ENCODE measurements at regions of chr15 and their contacts with region 1.

Region 1: DNA sequence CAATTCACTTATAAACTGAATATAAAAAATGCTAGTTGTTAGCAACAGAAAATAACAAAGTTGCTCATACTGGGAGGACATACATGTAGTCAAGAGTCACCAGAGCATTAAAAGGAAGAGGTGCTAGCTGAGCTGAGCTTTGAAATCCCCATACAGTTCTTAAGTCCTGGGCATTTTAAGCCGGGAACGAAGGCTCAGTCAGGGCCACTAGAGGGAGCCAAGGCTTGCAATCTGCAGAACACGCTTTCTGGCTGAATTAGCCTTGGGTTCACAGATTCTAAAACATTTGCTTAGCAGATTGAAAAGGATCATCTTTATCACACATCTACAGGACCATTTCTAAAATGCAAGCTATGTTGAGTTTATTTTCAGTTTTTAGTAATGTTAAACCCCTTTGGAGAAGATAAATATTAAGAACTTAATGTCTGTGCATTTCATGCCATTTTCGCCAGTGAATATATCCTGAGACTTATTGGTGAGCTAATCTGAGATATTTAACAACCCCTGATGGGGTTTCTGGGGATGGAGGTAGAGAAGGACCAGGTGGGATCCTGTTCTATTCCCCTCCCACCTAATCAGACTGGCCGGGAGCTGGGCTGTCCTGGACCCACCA is 26.3 kb upstream of the MNS1 start:
- DNase-seq: peak; percentile 29 to 60 (median 42)
- ATAC-seq: peak in 2 of 4 donors; percentile 59 to 76
- H3K4me3 ChIP-seq: no peak overlapping the region
- H3K27ac ChIP-seq: no peak overlapping the region
- H3K4me1 ChIP-seq: no peaks in the 10 kb centered on the region
- H3K27me3 ChIP-seq: no peaks in the 10 kb centered on the region
- CTCF ChIP-seq: peak; percentile 64 to 90 (median 76)
- POLR2A ChIP-seq: no peak

Region 2: GRCh38 chr15:56869573-56869972 is 378.4 kb after region 1 on chr15:
- intact Hi-C with region 1: loop called in 7 of 10 experiments (anchors 2 to 10 kb)
- DNase-seq: peak in 3 of 5 donors; percentile 31 to 41 (median 34)
- ATAC-seq: no peak
- H3K4me3 ChIP-seq: no peak overlapping the region
- H3K27ac ChIP-seq: no peak overlapping the region
- H3K4me1 ChIP-seq: peaks cover 0 to 11% (median 0%) of the 10 kb centered on the region in 12 donors
- H3K27me3 ChIP-seq: no peaks in the 10 kb centered on the region
- CTCF ChIP-seq: peak; percentile 33 to 69 (median 61)
- POLR2A ChIP-seq: no peak

Region 3: GRCh38 chr15:57146506-57147201 is 655.4 kb after region 1 on chr15:
- intact Hi-C with region 1: loop called in 1 of 10 experiments (anchors 10 kb)
- DNase-seq: peak in 1 of 5 donors; percentile 27
- ATAC-seq: peak in 2 of 4 donors; percentile 32 to 56
- H3K4me3 ChIP-seq: peak overlapping the region in 10 of 12 donors; percentile 4 to 45 (median 30)
- H3K27ac ChIP-seq: peak overlapping the region in 10 of 12 donors; percentile 2 to 67 (median 39)
- H3K4me1 ChIP-seq: peaks cover 3 to 60% (median 40%) of the 10 kb centered on the region in 12 donors
- H3K27me3 ChIP-seq: no peaks in the 10 kb centered on the region
- CTCF ChIP-seq: peak; percentile 62 to 86 (median 80)
- POLR2A ChIP-seq: no peak

Region 4: DNA sequence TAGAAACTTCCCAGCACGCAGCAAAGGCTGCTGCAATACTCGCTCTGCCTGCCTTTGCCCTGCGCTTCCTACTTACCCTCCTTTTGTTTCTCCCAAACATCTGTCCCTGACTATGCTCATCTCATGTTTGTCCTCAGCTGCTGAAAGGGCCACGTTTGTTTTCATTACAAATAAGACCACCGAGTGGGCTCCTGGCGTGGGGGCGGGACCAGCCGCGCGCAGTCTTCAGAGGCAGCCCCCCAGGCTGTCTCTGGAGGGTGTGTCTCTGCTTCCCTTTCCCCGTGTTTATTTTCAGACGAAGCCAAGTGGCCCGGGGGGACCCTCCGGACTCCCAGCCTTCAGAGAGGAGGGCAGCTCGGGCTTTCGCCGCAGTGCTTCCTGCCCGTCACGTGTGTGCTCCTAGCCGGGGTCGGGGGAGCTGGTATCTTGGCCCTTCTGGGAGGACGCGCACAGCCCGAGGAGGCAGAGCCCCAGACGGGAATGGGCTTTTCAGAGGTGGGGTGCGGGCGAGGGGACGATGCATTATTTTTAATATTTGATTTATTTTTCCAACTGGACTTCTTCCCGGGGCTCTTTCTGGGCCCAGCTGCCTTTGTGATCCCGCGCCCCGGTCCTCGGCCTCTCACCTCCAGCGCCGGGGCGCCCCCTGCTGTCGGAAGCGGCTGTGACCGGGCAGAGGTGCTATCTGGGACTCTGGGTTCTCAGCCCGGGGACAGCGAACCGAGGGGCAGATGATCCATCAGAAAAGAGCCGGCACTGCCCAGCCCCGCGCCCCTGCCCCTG is 815.1 kb after region 1 on chr15:
- intact Hi-C with region 1: loop called in 9 of 10 experiments (anchors 2 to 10 kb)
- DNase-seq: peak; percentile 86 to 94 (median 87)
- ATAC-seq: peak; percentile 64 to 92 (median 88)
- H3K4me3 ChIP-seq: peak overlapping the region; percentile 33 to 84 (median 63)
- H3K27ac ChIP-seq: peak overlapping the region in 7 of 12 donors; percentile 4 to 63 (median 30)
- H3K4me1 ChIP-seq: peaks cover 0 to 17% (median 8%) of the 10 kb centered on the region in 12 donors
- H3K27me3 ChIP-seq: no peaks in the 10 kb centered on the region
- CTCF ChIP-seq: peak; percentile 86 to 94 (median 90)
- POLR2A ChIP-seq: no peak

Region 5: GRCh38 chr15:57541805-57542504 is 1050.7 kb after region 1 on chr15:
- intact Hi-C with region 1: loop called in 1 of 10 experiments (anchors 10 kb)
- DNase-seq: peak; percentile 63 to 72 (median 66)
- ATAC-seq: peak in 3 of 4 donors; percentile 20 to 50 (median 43)
- H3K4me3 ChIP-seq: no peak overlapping the region
- H3K27ac ChIP-seq: no peak overlapping the region
- H3K4me1 ChIP-seq: peaks cover 0 to 6% (median 0%) of the 10 kb centered on the region in 12 donors
- H3K27me3 ChIP-seq: no peaks in the 10 kb centered on the region
- CTCF ChIP-seq: peak; percentile 60 to 89 (median 80)
- POLR2A ChIP-seq: no peak

Measured in heart left ventricle (tissue), 16 donors.